Naive thymus-derived CD4-positive, alpha-beta T cell (primary cell): ENCODE measurements at regions of chr2 and their contacts with region 1.

Region 1: GRCh38 chr2:230160112-230160660 is 59.6 kb downstream of the SP110 start:
- DNase-seq: peak; percentile 15 to 60 (median 52)
- ATAC-seq: peak; percentile 82
- H3K4me3 ChIP-seq: no peak overlapping the region
- H3K4me3 Mint-ChIP-seq: peak overlapping the region in 7 of 10 donors; percentile 35 to 68 (median 44)
- H3K27ac ChIP-seq: no peak overlapping the region
- H3K27ac Mint-ChIP-seq: peak overlapping the region in 2 of 9 donors; percentile 33 to 34
- H3K4me1 ChIP-seq: no peaks in the 10 kb centered on the region
- H3K4me1 Mint-ChIP-seq: peaks cover 6 to 11% (median 6%) of the 10 kb centered on the region in 7 donors
- H3K27me3 ChIP-seq: no peaks in the 10 kb centered on the region
- H3K27me3 Mint-ChIP-seq: no peaks in the 10 kb centered on the region

Region 2: GRCh38 chr2:229974266-229974665 is 185.9 kb before region 1 on chr2:
- CTCF ChIA-PET with region 1: no interaction called
- POLR2A ChIA-PET with region 1: no interaction called
- intact Hi-C with region 1: no loop called
- DNase-seq: no peak
- ATAC-seq: no peak
- H3K4me3 ChIP-seq: no peak overlapping the region
- H3K4me3 Mint-ChIP-seq: no peak overlapping the region
- H3K27ac ChIP-seq: no peak overlapping the region
- H3K27ac Mint-ChIP-seq: no peak overlapping the region
- H3K4me1 ChIP-seq: no peaks in the 10 kb centered on the region
- H3K4me1 Mint-ChIP-seq: no peaks in the 10 kb centered on the region
- H3K27me3 ChIP-seq: no peaks in the 10 kb centered on the region
- H3K27me3 Mint-ChIP-seq: no peaks in the 10 kb centered on the region

Region 3: GRCh38 chr2:230068016-230068650 is 92.1 kb before region 1 on chr2:
- CTCF ChIA-PET with region 1: interaction called, 3 read pairs
- POLR2A ChIA-PET with region 1: no interaction called
- intact Hi-C with region 1: loop called (anchors 1 to 5 kb)
- DNase-seq: peak; percentile 16 to 62 (median 38)
- ATAC-seq: peak; percentile 40
- H3K4me3 ChIP-seq: peak overlapping the region; percentile 62
- H3K4me3 Mint-ChIP-seq: peak overlapping the region; percentile 81 to 96 (median 90)
- H3K27ac ChIP-seq: no peak overlapping the region
- H3K27ac Mint-ChIP-seq: peak overlapping the region in 3 of 9 donors; percentile 69 to 80 (median 74)
- H3K4me1 ChIP-seq: peaks cover 0 to 7% of the 10 kb centered on the region in 2 donors
- H3K4me1 Mint-ChIP-seq: peaks cover 8 to 18% (median 12%) of the 10 kb centered on the region in 7 donors
- H3K27me3 ChIP-seq: no peaks in the 10 kb centered on the region
- H3K27me3 Mint-ChIP-seq: peaks cover 4 to 32% (median 5%) of the 10 kb centered on the region in 5 donors

Region 4: GRCh38 chr2:230137902-230138566 is 22.2 kb before region 1 on chr2:
- CTCF ChIA-PET with region 1: no interaction called
- POLR2A ChIA-PET with region 1: no interaction called
- intact Hi-C with region 1: no loop called
- DNase-seq: no peak
- ATAC-seq: no peak
- H3K4me3 ChIP-seq: no peak overlapping the region
- H3K4me3 Mint-ChIP-seq: no peak overlapping the region
- H3K27ac ChIP-seq: no peak overlapping the region
- H3K27ac Mint-ChIP-seq: no peak overlapping the region
- H3K4me1 ChIP-seq: no peaks in the 10 kb centered on the region
- H3K4me1 Mint-ChIP-seq: no peaks in the 10 kb centered on the region
- H3K27me3 ChIP-seq: no peaks in the 10 kb centered on the region
- H3K27me3 Mint-ChIP-seq: peaks cover 0 to 10% (median 6%) of the 10 kb centered on the region in 5 donors

Region 5: GRCh38 chr2:230184727-230185578 is 24.8 kb after region 1 on chr2:
- CTCF ChIA-PET with region 1: no interaction called
- POLR2A ChIA-PET with region 1: no interaction called
- intact Hi-C with region 1: no loop called
- DNase-seq: no peak
- ATAC-seq: no peak
- H3K4me3 ChIP-seq: no peak overlapping the region
- H3K4me3 Mint-ChIP-seq: no peak overlapping the region
- H3K27ac ChIP-seq: no peak overlapping the region
- H3K27ac Mint-ChIP-seq: peak overlapping the region in 5 of 9 donors; percentile 19 to 74 (median 48)
- H3K4me1 ChIP-seq: no peaks in the 10 kb centered on the region
- H3K4me1 Mint-ChIP-seq: peaks cover 0 to 23% (median 6%) of the 10 kb centered on the region in 7 donors
- H3K27me3 ChIP-seq: no peaks in the 10 kb centered on the region
- H3K27me3 Mint-ChIP-seq: no peaks in the 10 kb centered on the region